Adrenal gland (tissue), 19 donors: ENCODE measurements at regions of chr16 and their contacts with region 1.

Region 1: DNA sequence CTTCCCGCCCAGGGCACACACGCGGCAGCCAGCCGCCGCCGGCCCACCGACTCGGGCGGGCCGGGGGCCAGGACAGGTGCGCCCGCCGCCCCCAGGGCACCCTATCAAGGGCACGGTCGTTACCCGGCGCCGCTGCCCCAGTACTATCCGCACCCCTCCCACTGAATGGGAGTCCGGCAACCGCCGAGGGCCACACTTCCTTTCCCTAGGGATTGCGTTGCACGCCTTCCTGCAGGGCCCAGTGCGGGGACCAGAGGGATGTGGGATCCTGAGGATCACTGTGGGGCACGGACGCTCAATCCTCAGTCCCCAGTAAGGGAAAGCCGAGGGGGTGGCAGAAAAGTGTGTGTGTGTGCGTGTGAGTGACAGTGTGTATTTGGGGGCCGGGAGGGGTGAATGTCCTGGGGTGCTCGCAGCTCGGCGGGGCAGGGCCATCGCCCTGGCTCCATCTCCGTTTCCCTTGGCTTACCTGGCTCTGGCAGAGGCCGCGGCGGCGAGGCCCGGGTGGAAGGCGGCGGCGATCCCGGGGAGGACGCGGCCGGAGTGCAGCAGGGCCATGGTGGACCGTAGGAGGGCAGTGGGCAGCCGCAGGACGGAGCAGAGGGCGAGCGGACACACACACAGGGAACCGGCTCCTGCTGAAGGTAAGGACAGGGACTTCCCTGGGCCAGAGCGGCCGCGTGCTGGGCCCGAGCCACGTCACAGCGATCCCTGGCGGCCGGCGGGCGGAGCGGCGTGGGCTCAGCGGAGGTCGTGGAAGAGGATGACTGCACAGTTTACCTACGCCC is at the start of gene GOT2:
- DNase-seq: peak; percentile 79 to 90 (median 84)
- H3K4me3 ChIP-seq: peak within 1 kb of the TSS; percentile 46 to 85 (median 66)
- H3K27ac ChIP-seq: peak within 1 kb of the TSS in 4 of 5 donors; percentile 49 to 92 (median 71)
- H3K4me1 ChIP-seq: peaks cover 7 to 25% of the 10 kb centered on the region in 2 donors
- H3K27me3 ChIP-seq: no peaks in the 10 kb centered on the region
- CTCF ChIP-seq: peak; percentile 64 to 85 (median 78)
- POLR2A ChIP-seq: peak in 1 of 2 donors; percentile 65
- total RNA-seq, gene GOT2: 59.4 to 167 (median 113) TPM

Region 2: GRCh38 chr16:58684354-58685083 is 49.3 kb before region 1 on chr16 and contains the start of gene SLC38A7:
- intact Hi-C with region 1: loop called in 1 of 2 experiments (anchors 5 kb)
- DNase-seq: peak; percentile 87 to 95 (median 90)
- H3K4me3 ChIP-seq: peak within 1 kb of the TSS; percentile 10 to 87 (median 66)
- H3K27ac ChIP-seq: peak within 1 kb of the TSS; percentile 9 to 88 (median 69)
- H3K4me1 ChIP-seq: peaks cover 11 to 19% of the 10 kb centered on the region in 2 donors
- H3K27me3 ChIP-seq: no peaks in the 10 kb centered on the region
- CTCF ChIP-seq: no peak
- POLR2A ChIP-seq: peak in 1 of 2 donors; percentile 47
- total RNA-seq, gene SLC38A7: 14.4 to 56.4 (median 25.9) TPM